ENCODE measurements at regions of chr15 and their contacts with region 1.

Region 1: GRCh38 chr15:79756365-79756764 is 140.4 kb downstream of the MTHFS start:
- DNase-seq: no peak
- H3K4me3 Mint-ChIP-seq: no peak overlapping the region
- H3K27ac Mint-ChIP-seq: no peak overlapping the region
- H3K4me1 Mint-ChIP-seq: no peaks in the 10 kb centered on the region
- H3K27me3 Mint-ChIP-seq: peaks cover 16% of the 10 kb centered on the region
- CTCF ChIP-seq: no peak

Region 2: GRCh38 chr15:79811406-79812405 is 55.3 kb after region 1 on chr15:
- CTCF ChIA-PET with region 1: no interaction called
- intact Hi-C with region 1: no loop called
- DNase-seq: no peak
- H3K4me3 Mint-ChIP-seq: no peak overlapping the region
- H3K27ac Mint-ChIP-seq: no peak overlapping the region
- H3K4me1 Mint-ChIP-seq: no peaks in the 10 kb centered on the region
- H3K27me3 Mint-ChIP-seq: no peaks in the 10 kb centered on the region
- CTCF ChIP-seq: no peak

Region 3: GRCh38 chr15:80052597-80053300 is 296.4 kb after region 1 on chr15:
- CTCF ChIA-PET with region 1: no interaction called
- intact Hi-C with region 1: no loop called
- DNase-seq: no peak
- H3K4me3 Mint-ChIP-seq: no peak overlapping the region
- H3K27ac Mint-ChIP-seq: no peak overlapping the region
- H3K4me1 Mint-ChIP-seq: no peaks in the 10 kb centered on the region
- H3K27me3 Mint-ChIP-seq: peaks cover 4% of the 10 kb centered on the region
- CTCF ChIP-seq: no peak

Region 4: GRCh38 chr15:80179025-80179759 is 422.8 kb after region 1 on chr15:
- CTCF ChIA-PET with region 1: no interaction called
- intact Hi-C with region 1: loop called (anchors 5 kb)
- DNase-seq: peak; percentile 32
- H3K4me3 Mint-ChIP-seq: no peak overlapping the region
- H3K27ac Mint-ChIP-seq: no peak overlapping the region
- H3K4me1 Mint-ChIP-seq: no peaks in the 10 kb centered on the region
- H3K27me3 Mint-ChIP-seq: no peaks in the 10 kb centered on the region
- CTCF ChIP-seq: no peak